ENCODE measurements at regions of chr3 and their contacts with region 1.

Region 1: DNA sequence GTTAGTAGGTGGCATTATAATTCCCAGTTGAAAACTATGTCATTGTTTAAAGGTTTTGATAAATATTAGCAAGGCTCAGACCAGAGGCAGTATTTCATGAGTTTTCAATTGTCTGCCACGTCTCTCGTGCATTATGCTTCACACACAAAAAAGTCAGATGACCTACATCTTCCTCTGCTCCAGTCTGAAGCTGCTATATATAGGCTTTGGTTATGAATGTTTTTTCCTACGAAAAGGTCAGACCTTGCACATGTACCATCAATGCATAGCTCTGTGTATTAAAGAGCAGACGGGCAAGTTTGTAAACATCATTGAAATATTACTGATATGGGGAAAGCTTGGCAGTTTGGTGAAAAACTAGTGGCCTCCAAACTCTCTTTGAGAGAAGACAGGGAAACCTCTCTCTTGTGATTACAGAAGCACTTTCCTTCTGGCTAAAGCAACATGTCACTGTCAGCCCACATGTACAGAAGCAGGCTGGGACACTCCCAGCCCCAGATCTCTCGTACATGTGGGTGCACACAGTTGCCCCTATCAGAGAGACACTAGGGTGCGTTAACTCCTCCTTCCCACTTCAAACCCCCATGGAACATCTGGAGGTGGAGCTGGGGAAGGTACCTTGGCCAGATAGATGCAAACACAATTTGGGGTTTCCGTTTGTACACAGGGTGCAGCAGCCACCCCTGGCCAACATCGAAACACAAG is 184.0 kb upstream of the BCL6 start:
- DNase-seq: no peak
- H3K4me3 ChIP-seq: no peak overlapping the region
- CTCF ChIP-seq: no peak

Region 2: DNA sequence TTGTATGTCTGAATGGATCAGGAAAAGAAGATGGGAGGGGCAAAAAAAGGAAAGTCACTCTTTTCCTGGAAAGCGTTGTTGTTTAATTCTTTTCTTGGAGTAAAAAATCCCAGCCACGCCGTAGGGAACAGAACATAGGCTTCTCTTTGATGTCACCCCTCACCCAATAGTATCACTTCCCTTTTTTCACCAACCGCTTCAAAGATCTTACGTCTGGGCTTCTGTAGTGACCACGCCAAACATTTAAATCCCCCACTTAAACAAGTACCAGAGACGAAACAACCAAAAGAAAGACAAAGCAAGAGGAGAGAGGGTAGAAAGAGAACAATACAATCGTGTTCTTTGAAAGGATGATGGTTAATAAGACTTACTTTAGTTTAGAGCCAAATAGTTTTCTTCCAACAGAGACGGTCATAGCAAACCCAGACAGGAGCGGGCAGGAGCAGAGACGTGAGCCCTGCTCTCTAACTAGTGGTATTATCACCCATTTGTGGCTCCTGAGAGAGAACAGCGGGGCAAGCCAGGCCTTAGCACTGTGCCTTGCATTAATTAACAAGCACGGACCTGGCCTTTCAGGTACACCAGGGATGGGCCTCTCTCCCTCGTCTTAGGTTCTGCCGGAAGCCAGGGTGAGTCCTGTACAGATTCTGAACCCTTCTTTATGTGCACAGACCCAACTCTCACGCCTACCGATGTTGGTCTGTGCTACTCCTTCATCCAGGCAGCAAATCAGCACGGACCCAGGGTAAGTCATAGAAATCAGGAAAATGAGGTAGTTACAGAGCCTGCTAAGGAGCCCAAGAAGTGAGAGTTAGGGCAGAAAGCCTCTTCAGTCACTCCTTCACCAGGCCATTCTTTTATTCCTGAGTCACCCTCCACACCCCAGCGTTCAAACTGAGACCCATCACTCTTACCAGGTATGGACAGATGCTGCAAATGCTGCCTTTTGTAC is 155.8 kb before region 1 on chr3:
- CTCF ChIA-PET with region 1: no interaction called
- POLR2A ChIA-PET with region 1: no interaction called
- DNase-seq: no peak
- H3K4me3 ChIP-seq: no peak overlapping the region
- CTCF ChIP-seq: no peak

Region 3: GRCh38 chr3:187902041-187902471 is 27.2 kb before region 1 on chr3:
- CTCF ChIA-PET with region 1: no interaction called
- POLR2A ChIA-PET with region 1: no interaction called
- DNase-seq: no peak
- H3K4me3 ChIP-seq: no peak overlapping the region
- CTCF ChIP-seq: no peak

Region 4: GRCh38 chr3:187916072-187916471 is 13.2 kb before region 1 on chr3:
- CTCF ChIA-PET with region 1: interaction called, 21 read pairs
- POLR2A ChIA-PET with region 1: no interaction called
- DNase-seq: no peak
- H3K4me3 ChIP-seq: no peak overlapping the region
- CTCF ChIP-seq: no peak

Region 5: GRCh38 chr3:187951452-187952190 is 22.4 kb after region 1 on chr3:
- CTCF ChIA-PET with region 1: no interaction called
- POLR2A ChIA-PET with region 1: no interaction called
- DNase-seq: no peak
- H3K4me3 ChIP-seq: no peak overlapping the region
- CTCF ChIP-seq: no peak

Region 6: DNA sequence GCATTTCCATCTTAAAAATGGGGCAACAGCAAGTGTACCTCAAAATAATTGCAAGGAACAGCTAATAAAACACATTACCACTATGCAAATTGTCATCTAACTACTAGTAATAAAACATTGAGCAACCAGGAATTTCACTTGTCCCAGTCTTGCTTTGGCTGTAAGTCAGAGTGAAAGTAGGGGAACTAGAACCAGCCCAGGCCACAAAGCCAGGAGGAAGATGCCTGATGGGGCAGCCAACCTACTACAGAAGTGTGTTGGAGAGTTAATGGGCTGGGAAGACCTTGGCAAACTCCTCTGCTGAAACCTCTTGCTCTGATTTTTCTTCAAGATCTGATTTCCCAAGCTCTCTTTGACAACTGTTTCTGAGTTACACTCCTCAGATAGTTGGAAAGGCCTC is 184.5 kb after region 1 on chr3:
- CTCF ChIA-PET with region 1: no interaction called
- POLR2A ChIA-PET with region 1: no interaction called
- DNase-seq: no peak
- H3K4me3 ChIP-seq: no peak overlapping the region
- CTCF ChIP-seq: no peak

Measured in AG04449 (cell line).